CD8-positive, alpha-beta T cell (primary cell): ENCODE measurements at regions of chr1 and their contacts with region 1.

Region 1: DNA sequence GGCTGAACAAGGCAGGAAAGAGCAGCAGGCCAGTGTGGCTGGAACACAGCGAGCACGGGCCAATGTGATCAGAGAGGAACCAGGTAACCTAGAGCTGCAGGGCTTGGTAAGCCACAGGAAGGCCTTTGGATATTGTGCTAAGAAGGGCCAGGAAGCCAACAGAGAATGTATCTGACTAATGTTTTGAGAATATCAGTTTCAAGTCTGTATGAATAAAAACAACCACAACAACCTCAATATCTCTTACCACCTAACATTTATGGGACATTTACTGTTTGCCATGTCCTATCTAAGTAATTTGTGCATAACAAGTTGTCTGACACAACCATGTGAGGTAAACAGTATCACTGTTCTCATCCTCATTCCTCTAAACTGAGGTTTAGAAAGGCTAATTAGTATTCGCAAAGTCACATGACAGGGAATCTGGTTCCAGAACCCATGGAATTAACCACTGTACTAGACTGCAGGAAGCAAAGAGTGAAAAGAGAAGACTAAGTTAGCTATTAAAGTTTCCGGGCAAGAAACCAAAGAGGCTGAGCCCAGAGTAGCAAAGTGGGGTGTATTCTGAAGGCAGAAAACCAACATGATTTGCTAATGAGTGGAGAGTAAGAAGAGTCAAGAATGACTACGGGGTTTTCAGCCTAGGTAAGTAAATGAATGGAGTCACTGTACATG is 38.9 kb downstream of the SPRTN start:
- DNase-seq: no peak
- ATAC-seq: peak; percentile 42
- H3K4me3 ChIP-seq: no peak overlapping the region
- H3K4me3 Mint-ChIP-seq: no peak overlapping the region
- H3K27ac ChIP-seq: no peak overlapping the region
- H3K27ac Mint-ChIP-seq: peak overlapping the region; percentile 55
- H3K4me1 ChIP-seq: peaks cover 4% of the 10 kb centered on the region
- H3K4me1 Mint-ChIP-seq: peaks cover 43% of the 10 kb centered on the region
- H3K27me3 ChIP-seq: no peaks in the 10 kb centered on the region
- H3K27me3 Mint-ChIP-seq: no peaks in the 10 kb centered on the region
- CTCF ChIP-seq: no peak

Region 2: GRCh38 chr1:231264642-231265041 is 112.4 kb before region 1 on chr1:
- CTCF ChIA-PET with region 1: no interaction called
- POLR2A ChIA-PET with region 1: no interaction called
- intact Hi-C with region 1: no loop called
- DNase-seq: no peak
- ATAC-seq: no peak
- H3K4me3 ChIP-seq: no peak overlapping the region
- H3K4me3 Mint-ChIP-seq: no peak overlapping the region
- H3K27ac ChIP-seq: no peak overlapping the region
- H3K27ac Mint-ChIP-seq: no peak overlapping the region
- H3K4me1 ChIP-seq: no peaks in the 10 kb centered on the region
- H3K4me1 Mint-ChIP-seq: no peaks in the 10 kb centered on the region
- H3K27me3 ChIP-seq: no peaks in the 10 kb centered on the region
- H3K27me3 Mint-ChIP-seq: no peaks in the 10 kb centered on the region
- CTCF ChIP-seq: no peak

Region 3: DNA sequence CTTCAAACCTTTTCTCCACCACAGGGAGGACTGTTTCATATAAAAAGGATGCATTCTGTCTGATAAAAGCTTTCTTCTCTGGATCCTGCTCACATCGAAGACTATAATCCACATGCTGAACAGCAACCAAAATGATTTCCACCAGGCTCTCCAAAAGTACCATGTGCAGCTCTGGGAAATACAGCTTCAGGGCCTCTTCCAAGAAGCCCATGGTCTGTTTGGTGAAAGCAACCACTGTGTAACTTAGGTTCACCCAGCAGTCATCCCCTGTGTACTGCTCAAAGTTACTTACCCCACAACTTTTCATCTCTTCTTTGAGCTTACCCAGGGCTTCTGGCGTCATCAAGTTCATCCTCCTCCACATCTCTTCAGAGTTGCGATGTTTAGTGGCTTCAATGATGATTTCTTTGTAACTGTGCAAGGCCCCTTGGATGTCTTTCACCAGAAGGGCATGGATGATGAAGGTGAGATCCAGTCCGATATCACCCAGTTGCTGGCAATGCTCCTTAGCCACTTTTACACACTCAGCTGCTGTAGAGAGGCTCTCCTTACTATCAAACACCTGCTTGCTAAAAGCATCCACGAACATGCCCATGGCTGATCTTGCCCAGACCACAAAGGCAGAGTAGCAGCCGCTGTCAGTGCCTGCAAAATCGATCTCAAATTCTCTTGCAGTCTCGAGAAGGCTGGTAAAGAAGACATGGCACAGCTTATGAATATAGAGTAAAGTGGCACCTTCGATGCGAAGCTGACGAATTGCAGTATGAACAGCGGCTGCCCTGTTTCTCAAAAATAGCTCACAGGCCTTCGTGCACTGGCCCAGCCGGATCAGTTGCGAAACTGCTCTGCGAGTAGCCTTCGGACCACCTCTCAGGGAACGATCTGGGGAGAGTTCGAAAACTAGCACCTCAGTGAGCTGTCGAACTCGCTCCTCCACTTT is 41.1 kb before region 1 on chr1:
- CTCF ChIA-PET with region 1: no interaction called
- POLR2A ChIA-PET with region 1: no interaction called
- intact Hi-C with region 1: no loop called
- DNase-seq: no peak
- ATAC-seq: no peak
- H3K4me3 ChIP-seq: peak overlapping the region; percentile 95 to 98
- H3K4me3 Mint-ChIP-seq: peak overlapping the region; percentile 97
- H3K27ac ChIP-seq: no peak overlapping the region
- H3K27ac Mint-ChIP-seq: peak overlapping the region; percentile 82
- H3K4me1 ChIP-seq: peaks cover 58% of the 10 kb centered on the region
- H3K4me1 Mint-ChIP-seq: peaks cover 68% of the 10 kb centered on the region
- H3K27me3 ChIP-seq: no peaks in the 10 kb centered on the region
- H3K27me3 Mint-ChIP-seq: no peaks in the 10 kb centered on the region
- CTCF ChIP-seq: no peak

Region 4: GRCh38 chr1:231410036-231410612 is 33.1 kb after region 1 on chr1:
- CTCF ChIA-PET with region 1: no interaction called
- POLR2A ChIA-PET with region 1: no interaction called
- intact Hi-C with region 1: loop called in 1 of 2 experiments (anchors 5 kb)
- DNase-seq: no peak
- ATAC-seq: no peak
- H3K4me3 ChIP-seq: no peak overlapping the region
- H3K4me3 Mint-ChIP-seq: no peak overlapping the region
- H3K27ac ChIP-seq: no peak overlapping the region
- H3K27ac Mint-ChIP-seq: no peak overlapping the region
- H3K4me1 ChIP-seq: peaks cover 41% of the 10 kb centered on the region
- H3K4me1 Mint-ChIP-seq: peaks cover 42% of the 10 kb centered on the region
- H3K27me3 ChIP-seq: no peaks in the 10 kb centered on the region
- H3K27me3 Mint-ChIP-seq: no peaks in the 10 kb centered on the region
- CTCF ChIP-seq: no peak

Region 5: DNA sequence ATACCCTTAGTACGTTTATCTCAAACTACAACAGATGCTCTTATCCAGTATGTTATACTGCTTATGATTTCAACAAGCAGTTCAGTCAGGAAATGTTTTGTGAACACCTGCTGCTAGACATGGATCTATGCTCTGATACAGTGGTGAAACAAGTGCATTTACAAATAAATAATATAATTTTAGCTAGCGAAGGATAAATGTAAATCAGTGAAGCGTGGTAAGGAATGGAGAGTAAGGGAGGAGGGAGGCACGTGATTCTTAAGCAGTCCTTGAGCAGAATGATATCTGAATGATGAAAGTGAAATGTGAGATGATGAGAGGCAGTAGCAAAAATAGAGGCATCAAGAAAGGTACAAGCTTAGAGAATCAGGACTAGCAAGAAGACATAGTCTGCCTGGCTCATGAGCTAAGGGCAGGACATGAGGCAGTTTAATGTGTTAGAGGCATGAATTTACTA is 157.7 kb after region 1 on chr1:
- CTCF ChIA-PET with region 1: no interaction called
- POLR2A ChIA-PET with region 1: no interaction called
- intact Hi-C with region 1: no loop called
- DNase-seq: no peak
- ATAC-seq: no peak
- H3K4me3 ChIP-seq: no peak overlapping the region
- H3K4me3 Mint-ChIP-seq: no peak overlapping the region
- H3K27ac ChIP-seq: no peak overlapping the region
- H3K27ac Mint-ChIP-seq: no peak overlapping the region
- H3K4me1 ChIP-seq: peaks cover 36% of the 10 kb centered on the region
- H3K4me1 Mint-ChIP-seq: peaks cover 46% of the 10 kb centered on the region
- H3K27me3 ChIP-seq: no peaks in the 10 kb centered on the region
- H3K27me3 Mint-ChIP-seq: no peaks in the 10 kb centered on the region
- CTCF ChIP-seq: no peak

Region 6: GRCh38 chr1:232793944-232794343 is 1416.9 kb after region 1 on chr1:
- CTCF ChIA-PET with region 1: no interaction called
- POLR2A ChIA-PET with region 1: no interaction called
- intact Hi-C with region 1: no loop called
- DNase-seq: peak in 3 of 9 experiments; percentile 6 to 54 (median 39)
- ATAC-seq: peak; percentile 48
- H3K4me3 ChIP-seq: no peak overlapping the region
- H3K4me3 Mint-ChIP-seq: no peak overlapping the region
- H3K27ac ChIP-seq: no peak overlapping the region
- H3K27ac Mint-ChIP-seq: peak overlapping the region; percentile 15
- H3K4me1 ChIP-seq: peaks cover 11% of the 10 kb centered on the region
- H3K4me1 Mint-ChIP-seq: peaks cover 13% of the 10 kb centered on the region
- H3K27me3 ChIP-seq: no peaks in the 10 kb centered on the region
- H3K27me3 Mint-ChIP-seq: peaks cover 2% of the 10 kb centered on the region
- CTCF ChIP-seq: no peak